Activated CD4-positive, alpha-beta T cell treated with anti-CD3 and anti-CD28 coated beads for 36 hours (primary cell): ENCODE measurements at regions of chr12 and their contacts with region 1.

Region 1: DNA sequence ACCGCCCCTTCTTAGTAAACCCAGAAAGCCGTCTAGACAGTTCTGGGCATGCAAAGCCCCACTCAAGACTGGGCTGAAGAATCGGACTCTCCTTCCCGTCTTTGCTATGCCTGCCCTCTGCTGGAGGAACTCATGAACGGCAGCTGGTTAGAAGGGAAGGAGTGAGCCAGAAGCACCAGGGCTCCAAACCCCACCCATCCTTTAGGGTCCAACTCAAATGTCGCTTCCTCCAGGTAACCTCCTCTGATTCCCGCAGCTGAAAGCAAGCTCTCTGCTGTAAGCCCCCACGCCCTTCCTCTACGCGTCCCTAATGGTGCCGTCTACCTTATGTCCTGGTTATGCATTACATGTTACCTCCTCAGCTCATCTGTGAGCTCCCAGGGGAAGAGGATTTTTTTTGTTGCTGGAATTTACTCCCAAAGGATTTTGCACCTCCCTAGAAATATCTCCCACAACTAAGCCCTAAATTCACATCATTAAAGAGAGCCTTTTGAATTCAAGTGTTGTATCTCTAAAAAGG is 59.0 kb upstream of the SCN8A start:
- DNase-seq: peak; percentile 85
- ATAC-seq: peak; percentile 94
- H3K4me3 Mint-ChIP-seq: no peak overlapping the region
- H3K27ac Mint-ChIP-seq: no peak overlapping the region
- H3K4me1 Mint-ChIP-seq: peaks cover 6% of the 10 kb centered on the region
- H3K27me3 Mint-ChIP-seq: peaks cover 2% of the 10 kb centered on the region

Region 2: GRCh38 chr12:51172515-51173431 is 359.3 kb before region 1 on chr12 and contains the start of gene TFCP2:
- CTCF ChIA-PET with region 1: no interaction called
- POLR2A ChIA-PET with region 1: no interaction called
- intact Hi-C with region 1: no loop called
- DNase-seq: peak; percentile 97
- ATAC-seq: peak; percentile 99
- H3K4me3 Mint-ChIP-seq: no peak within 1 kb of the TSS
- H3K27ac Mint-ChIP-seq: peak within 1 kb of the TSS; percentile 78
- H3K4me1 Mint-ChIP-seq: peaks cover 10% of the 10 kb centered on the region
- H3K27me3 Mint-ChIP-seq: no peaks in the 10 kb centered on the region
- total RNA-seq, gene TFCP2: 39.5 to 47.3 TPM

Region 3: DNA sequence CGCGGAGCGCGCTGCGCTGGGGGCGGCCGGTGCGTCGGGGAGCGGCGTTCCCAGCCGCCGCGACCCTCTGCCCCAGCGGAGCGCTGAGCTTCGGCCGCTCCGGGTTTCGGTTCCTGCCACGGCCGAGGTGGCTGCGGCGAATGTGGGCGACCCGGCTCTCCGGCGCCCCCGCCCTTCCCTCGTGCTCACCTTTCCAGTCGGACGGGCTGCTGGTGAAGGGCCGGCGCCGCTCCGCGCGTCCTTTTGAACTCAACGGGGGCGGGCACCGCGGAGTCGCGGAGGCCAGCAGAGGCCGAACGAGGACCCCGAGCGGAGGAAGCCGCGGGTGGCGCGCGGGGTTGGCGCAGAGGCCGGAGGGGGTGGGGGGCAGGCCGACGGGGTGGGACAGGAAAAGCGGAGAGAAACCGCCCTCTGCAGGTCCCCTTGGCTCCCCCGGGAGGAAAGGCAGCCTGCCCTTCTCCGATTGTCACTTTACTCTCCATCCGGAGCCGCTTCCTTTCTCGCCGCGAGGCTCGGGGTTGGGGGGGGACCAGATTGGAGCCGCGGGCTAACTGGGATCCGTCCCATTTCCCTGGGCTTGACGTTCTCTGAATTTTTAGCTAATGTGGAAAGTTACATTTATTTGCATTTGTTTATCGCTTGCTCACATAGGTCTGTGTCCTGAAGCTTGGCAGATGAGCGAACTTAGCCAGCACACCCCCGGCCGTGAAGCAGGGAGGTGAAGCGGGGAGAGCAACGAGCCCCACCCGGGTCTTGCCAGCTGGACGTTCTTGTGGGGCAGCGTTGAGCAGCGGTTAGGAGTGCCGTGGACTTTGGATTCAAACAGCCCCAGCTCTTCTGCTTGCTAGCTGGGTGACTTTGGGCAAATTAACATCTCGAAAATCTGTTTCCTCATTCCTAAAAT is 261.7 kb before region 1 on chr12 and contains the start of gene SMAGP:
- CTCF ChIA-PET with region 1: no interaction called
- POLR2A ChIA-PET with region 1: no interaction called
- intact Hi-C with region 1: loop called in 1 of 2 experiments (anchors 5 kb)
- DNase-seq: peak; percentile 57
- ATAC-seq: peak; percentile 41
- H3K4me3 Mint-ChIP-seq: peak within 1 kb of the TSS; percentile 78
- H3K27ac Mint-ChIP-seq: no peak within 1 kb of the TSS
- H3K4me1 Mint-ChIP-seq: peaks cover 18% of the 10 kb centered on the region
- H3K27me3 Mint-ChIP-seq: peaks cover 14% of the 10 kb centered on the region
- total RNA-seq, gene SMAGP: 0.69 to 0.86 TPM

Region 4: DNA sequence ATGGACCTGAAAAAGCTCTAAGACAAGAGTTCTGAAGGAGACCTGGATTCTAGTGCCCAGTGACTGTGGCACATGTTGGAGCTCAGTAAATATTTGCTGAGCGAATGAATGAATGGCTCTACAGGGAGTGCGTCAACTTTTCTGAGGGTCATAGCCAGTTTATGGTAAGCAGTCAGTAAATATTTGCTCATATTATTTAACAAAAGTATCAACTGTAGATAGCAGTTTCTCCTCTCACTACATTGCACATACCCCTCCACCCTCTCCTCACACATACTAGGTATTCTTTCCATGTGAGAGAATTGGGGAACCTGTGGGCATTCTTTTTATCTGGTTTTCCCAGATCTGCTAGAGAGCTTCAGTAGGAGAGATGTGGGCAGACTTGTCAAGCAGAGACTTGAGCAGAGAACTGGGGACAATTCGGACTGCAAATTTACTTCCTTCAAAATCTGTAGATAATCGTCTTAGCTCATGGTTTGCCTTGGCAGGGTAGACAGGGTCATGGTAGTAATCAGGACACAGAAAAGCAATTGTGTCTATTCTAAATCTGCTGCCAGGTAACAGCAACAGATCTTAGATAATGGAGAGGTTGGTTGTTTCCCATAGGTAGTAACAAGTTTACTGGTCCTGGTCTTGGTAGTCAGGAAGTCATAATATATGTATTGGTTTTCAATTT is 101.7 kb before region 1 on chr12:
- CTCF ChIA-PET with region 1: interaction called, 11 read pairs
- POLR2A ChIA-PET with region 1: no interaction called
- intact Hi-C with region 1: loop called in 1 of 2 experiments (anchors 1 kb)
- DNase-seq: no peak
- ATAC-seq: no peak
- H3K4me3 Mint-ChIP-seq: no peak overlapping the region
- H3K27ac Mint-ChIP-seq: no peak overlapping the region
- H3K4me1 Mint-ChIP-seq: peaks cover 2% of the 10 kb centered on the region
- H3K27me3 Mint-ChIP-seq: no peaks in the 10 kb centered on the region

Region 5: DNA sequence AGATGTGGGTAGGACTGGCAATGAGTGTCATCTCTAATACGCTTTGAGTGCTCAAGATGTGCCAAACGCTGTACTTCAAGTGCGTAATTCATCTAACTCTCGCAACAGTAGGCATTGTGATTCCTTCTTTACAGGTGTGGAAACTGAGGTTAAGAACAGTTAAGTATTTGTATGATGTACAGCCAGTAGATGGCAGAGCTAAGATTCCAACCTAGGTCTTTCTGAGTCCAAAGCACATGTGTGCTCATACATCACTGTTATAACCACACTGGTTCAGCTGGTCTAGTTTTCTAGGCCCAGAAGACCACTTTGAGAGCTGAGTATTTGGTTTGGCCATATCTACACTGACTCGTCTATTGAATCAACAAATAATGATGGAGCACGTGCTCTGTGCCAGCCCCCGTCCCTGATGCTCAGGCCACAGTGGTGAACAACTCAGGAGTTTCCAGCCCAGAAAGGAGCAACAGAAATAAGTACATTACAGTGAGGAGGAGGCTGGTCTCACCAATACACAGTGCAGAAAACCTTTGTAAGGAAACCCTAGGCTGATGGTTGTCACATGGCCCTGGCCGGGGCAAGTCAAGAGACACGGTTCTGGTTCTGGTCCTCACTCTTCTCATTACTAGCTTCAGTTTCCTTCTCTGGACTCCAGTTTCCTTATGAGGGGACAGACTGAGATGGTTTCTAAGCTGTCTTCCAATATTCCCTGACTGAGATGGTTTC is 10.3 kb before region 1 on chr12:
- CTCF ChIA-PET with region 1: interaction called, 22 read pairs
- POLR2A ChIA-PET with region 1: no interaction called
- intact Hi-C with region 1: no loop called
- DNase-seq: no peak
- ATAC-seq: no peak
- H3K4me3 Mint-ChIP-seq: no peak overlapping the region
- H3K27ac Mint-ChIP-seq: no peak overlapping the region
- H3K4me1 Mint-ChIP-seq: no peaks in the 10 kb centered on the region
- H3K27me3 Mint-ChIP-seq: no peaks in the 10 kb centered on the region

Region 6: GRCh38 chr12:51871126-51871525 is 339.1 kb after region 1 on chr12:
- CTCF ChIA-PET with region 1: interaction called, 6 read pairs
- POLR2A ChIA-PET with region 1: no interaction called
- intact Hi-C with region 1: loop called in 1 of 2 experiments (anchors 1 kb)
- DNase-seq: no peak
- ATAC-seq: no peak
- H3K4me3 Mint-ChIP-seq: no peak overlapping the region
- H3K27ac Mint-ChIP-seq: no peak overlapping the region
- H3K4me1 Mint-ChIP-seq: peaks cover 11% of the 10 kb centered on the region
- H3K27me3 Mint-ChIP-seq: peaks cover 31% of the 10 kb centered on the region